ENCODE measurements at regions of chr16 and their contacts with region 1.

Region 1: GRCh38 chr16:21158208-21159110 is at the start of gene LDAF1:
- DNase-seq: peak; percentile 92 to 96
- ATAC-seq: peak; percentile 95
- H3K4me3 ChIP-seq: peak within 1 kb of the TSS; percentile 78 to 94
- H3K27ac ChIP-seq: peak within 1 kb of the TSS; percentile 36 to 48
- H3K4me1 ChIP-seq: no peaks in the 10 kb centered on the region
- H3K27me3 ChIP-seq: no peaks in the 10 kb centered on the region
- total RNA-seq, gene LDAF1: 42.8 to 55.5 TPM

Region 2: DNA sequence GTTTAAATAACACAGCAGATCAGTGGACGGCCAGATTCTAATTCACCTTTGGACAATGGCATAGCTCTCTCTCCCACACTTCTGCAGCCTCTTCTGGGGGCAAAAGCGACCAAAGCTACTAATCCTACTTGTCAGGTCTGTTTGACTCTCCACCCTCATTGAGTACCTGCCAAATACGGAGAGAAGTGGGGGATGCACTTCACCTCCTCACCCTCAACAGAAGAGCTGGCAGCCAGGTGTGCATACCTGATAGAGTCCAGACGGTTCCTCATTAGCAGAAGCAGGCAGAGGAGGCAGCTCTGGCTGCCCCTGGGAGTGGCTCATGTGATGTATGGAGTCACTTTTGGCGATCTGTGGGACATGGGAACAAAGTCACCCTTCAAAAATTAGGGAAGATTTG is 12.7 kb before region 1 on chr16:
- intact Hi-C with region 1: no loop called
- DNase-seq: no peak
- ATAC-seq: no peak
- H3K4me3 ChIP-seq: no peak overlapping the region
- H3K27ac ChIP-seq: no peak overlapping the region
- H3K4me1 ChIP-seq: no peaks in the 10 kb centered on the region
- H3K27me3 ChIP-seq: no peaks in the 10 kb centered on the region

Region 3: GRCh38 chr16:21203155-21203797 is 44.8 kb after region 1 on chr16:
- intact Hi-C with region 1: no loop called
- DNase-seq: no peak
- ATAC-seq: no peak
- H3K4me3 ChIP-seq: no peak overlapping the region
- H3K27ac ChIP-seq: no peak overlapping the region
- H3K4me1 ChIP-seq: no peaks in the 10 kb centered on the region
- H3K27me3 ChIP-seq: no peaks in the 10 kb centered on the region

Region 4: GRCh38 chr16:21554795-21555585 is 396.5 kb after region 1 on chr16:
- intact Hi-C with region 1: loop called in 1 of 2 experiments (anchors 10 kb)
- DNase-seq: peak; percentile 86 to 98
- ATAC-seq: peak; percentile 89
- H3K4me3 ChIP-seq: no peak overlapping the region
- H3K27ac ChIP-seq: no peak overlapping the region
- H3K4me1 ChIP-seq: no peaks in the 10 kb centered on the region
- H3K27me3 ChIP-seq: no peaks in the 10 kb centered on the region

Region 5: DNA sequence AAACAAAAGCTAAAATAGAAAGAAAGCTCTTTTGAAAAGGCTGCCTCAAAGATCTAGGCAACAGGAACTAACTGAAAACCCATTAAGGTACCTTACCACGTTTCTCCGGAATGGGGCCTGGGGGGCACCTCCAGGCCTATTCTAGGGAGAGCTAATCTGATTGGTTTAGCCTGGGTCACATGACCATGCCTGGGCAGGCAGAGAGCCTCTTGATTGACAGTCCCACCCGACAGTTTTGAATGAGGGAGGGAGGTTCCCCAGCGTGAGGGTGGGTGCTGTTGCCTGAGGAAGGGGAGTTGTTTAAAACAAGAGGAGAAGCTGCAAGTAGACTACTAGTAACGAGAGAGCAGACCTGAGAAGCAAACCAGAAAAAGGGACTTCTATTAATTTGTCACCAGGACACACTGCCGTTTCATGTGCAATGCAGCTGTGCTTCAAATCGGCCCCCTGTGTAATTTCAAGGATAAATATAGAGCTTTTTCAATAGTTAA is 1512.1 kb after region 1 on chr16:
- intact Hi-C with region 1: loop called in 1 of 2 experiments (anchors 10 kb)
- DNase-seq: no peak
- ATAC-seq: no peak
- H3K4me3 ChIP-seq: no peak overlapping the region
- H3K27ac ChIP-seq: no peak overlapping the region
- H3K4me1 ChIP-seq: no peaks in the 10 kb centered on the region
- H3K27me3 ChIP-seq: no peaks in the 10 kb centered on the region

Measured in aorta (tissue), 5 donors.